Activated CD8-positive, alpha-beta T cell treated with anti-CD3 and anti-CD28 coated beads for 36 hours (primary cell): ENCODE measurements at regions of chr1 and their contacts with region 1.

Region 1: DNA sequence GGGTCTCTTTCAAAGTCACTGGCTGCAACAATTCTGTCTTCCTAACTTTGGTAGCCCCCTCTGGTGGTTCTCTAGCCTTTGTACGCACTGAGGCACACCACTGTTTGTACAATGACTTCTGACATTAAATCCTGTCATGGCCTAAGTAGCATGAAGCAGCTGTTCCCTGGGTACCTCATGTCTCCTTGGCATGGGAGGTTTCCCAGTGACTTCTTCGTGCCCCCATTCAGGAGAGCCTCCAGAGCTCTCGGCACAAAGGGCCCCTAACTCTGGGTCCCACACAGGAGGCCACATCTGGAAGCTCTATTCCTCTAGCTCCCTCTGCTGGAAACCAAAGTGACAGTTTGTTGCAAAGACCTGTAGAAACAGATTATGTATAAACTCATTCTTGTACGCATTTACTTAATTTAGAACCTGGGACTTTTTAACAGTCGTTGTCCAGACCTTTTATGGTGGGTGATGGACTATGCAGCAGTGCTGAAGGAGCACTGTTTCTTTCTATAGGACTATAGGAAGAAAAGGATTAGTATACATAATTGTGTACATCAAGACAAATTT is 13.4 kb downstream of the SWT1 start:
- DNase-seq: peak; percentile 59
- ATAC-seq: peak; percentile 95
- H3K4me3 Mint-ChIP-seq: no peak overlapping the region
- H3K27ac Mint-ChIP-seq: peak overlapping the region; percentile 64
- H3K4me1 Mint-ChIP-seq: peaks cover 4% of the 10 kb centered on the region
- H3K27me3 Mint-ChIP-seq: no peaks in the 10 kb centered on the region
- CTCF ChIP-seq: peak; percentile 80

Region 2: DNA sequence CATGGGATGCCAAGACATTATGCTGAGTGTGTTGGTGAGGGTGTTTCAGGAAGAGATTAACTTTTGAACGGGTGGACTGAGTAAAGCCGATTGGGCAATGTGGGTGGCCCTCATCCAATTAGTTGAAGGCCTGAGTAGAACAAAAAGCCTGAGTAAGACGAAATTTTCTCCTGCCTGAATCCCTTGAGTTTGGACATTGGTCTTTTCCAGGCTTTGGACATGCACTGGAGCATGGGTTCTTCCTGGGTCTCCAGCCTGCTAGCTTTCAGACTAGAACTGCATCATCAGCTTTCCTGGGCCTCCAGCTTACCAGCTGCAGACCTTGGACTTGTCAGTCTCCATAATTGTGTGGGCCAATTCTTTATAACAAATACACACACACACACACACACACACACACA is 259.7 kb before region 1 on chr1:
- CTCF ChIA-PET with region 1: no interaction called
- POLR2A ChIA-PET with region 1: no interaction called
- intact Hi-C with region 1: no loop called
- DNase-seq: no peak
- ATAC-seq: no peak
- H3K4me3 Mint-ChIP-seq: no peak overlapping the region
- H3K27ac Mint-ChIP-seq: no peak overlapping the region
- H3K4me1 Mint-ChIP-seq: peaks cover under 1% of the 10 kb centered on the region
- H3K27me3 Mint-ChIP-seq: no peaks in the 10 kb centered on the region
- CTCF ChIP-seq: no peak

Region 3: DNA sequence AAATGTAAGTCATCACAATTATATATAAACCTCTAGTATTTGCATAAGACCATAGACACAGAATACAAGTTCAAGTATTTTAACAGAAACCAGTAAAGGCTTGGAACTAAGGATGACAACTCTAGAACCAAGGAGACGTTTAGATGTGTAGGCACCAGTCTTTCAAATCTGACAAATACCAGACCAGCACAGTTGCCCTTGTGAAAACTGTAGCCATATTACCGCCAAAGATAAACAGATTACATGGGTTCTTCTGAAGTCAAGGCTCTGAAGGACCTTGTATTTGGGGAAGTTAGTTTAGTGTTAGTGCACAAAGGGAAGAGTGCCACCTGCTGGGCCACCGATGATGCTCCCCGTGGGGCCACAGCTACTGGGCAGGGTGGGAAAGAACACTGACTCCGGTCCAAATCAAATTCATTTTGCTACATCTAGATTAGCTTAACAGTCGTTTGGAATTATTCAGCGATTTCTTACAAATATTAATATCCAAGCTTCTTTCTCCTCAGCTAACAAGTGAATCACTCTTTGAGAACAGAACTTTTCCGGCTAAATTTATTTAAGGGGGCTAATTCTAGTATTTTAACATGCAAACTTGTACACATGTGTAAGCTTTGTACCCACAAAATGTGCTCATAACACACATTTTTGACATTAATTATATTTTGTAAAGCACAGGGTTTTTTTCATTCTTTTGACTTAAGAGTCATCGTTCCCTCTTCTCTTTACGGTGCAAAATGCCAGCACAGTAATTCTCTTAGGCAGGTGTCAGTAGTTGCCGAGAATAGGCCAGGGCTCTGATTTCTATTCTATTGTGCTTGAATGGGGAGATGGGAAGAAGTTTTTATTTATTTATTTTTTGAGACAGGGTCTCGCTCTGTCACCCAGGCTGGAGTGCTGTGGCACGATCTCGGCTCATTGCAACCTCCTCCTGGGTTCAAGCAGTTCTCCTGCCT is 188.1 kb before region 1 on chr1:
- CTCF ChIA-PET with region 1: interaction called, 17 read pairs
- POLR2A ChIA-PET with region 1: no interaction called
- intact Hi-C with region 1: loop called (anchors 10 kb)
- DNase-seq: peak; percentile 85
- ATAC-seq: peak; percentile 99
- H3K4me3 Mint-ChIP-seq: no peak overlapping the region
- H3K27ac Mint-ChIP-seq: no peak overlapping the region
- H3K4me1 Mint-ChIP-seq: peaks cover 5% of the 10 kb centered on the region
- H3K27me3 Mint-ChIP-seq: peaks cover 14% of the 10 kb centered on the region
- CTCF ChIP-seq: peak; percentile 93

Region 4: DNA sequence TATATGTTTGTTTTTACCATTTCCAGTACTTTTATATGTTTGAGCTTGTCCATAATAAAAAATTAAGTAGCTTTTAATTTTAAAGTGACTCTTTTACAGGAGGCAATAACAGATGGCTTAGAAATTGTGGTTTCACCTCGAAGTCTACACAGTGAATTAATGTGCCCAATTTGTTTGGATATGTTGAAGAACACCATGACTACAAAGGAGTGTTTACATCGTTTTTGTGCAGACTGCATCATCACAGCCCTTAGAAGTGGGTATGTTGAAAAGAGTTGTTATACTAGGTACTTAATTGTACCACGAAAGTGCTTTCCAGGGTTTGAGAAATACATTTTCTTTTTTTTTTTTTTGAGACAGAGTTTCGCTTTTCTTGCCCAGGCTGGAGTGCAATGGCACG is 78.9 kb before region 1 on chr1:
- CTCF ChIA-PET with region 1: interaction called, 11 read pairs
- POLR2A ChIA-PET with region 1: no interaction called
- intact Hi-C with region 1: no loop called
- DNase-seq: no peak
- ATAC-seq: no peak
- H3K4me3 Mint-ChIP-seq: no peak overlapping the region
- H3K27ac Mint-ChIP-seq: no peak overlapping the region
- H3K4me1 Mint-ChIP-seq: no peaks in the 10 kb centered on the region
- H3K27me3 Mint-ChIP-seq: no peaks in the 10 kb centered on the region
- CTCF ChIP-seq: no peak

Region 5: GRCh38 chr1:185156854-185157598 is 13.3 kb before region 1 on chr1 and contains the starts of genes SWT1 and TRMT1L:
- CTCF ChIA-PET with region 1: interaction called, 71 read pairs
- POLR2A ChIA-PET with region 1: interaction called, 6 read pairs
- intact Hi-C with region 1: no loop called
- DNase-seq: peak; percentile 100
- ATAC-seq: peak; percentile 94
- H3K4me3 Mint-ChIP-seq: peak within 1 kb of the TSS; percentile 90
- H3K27ac Mint-ChIP-seq: peak within 1 kb of the TSS; percentile 97
- H3K4me1 Mint-ChIP-seq: peaks cover 45% of the 10 kb centered on the region
- H3K27me3 Mint-ChIP-seq: no peaks in the 10 kb centered on the region
- CTCF ChIP-seq: no peak
- total RNA-seq, gene SWT1: 1.8 to 2.5 TPM
- total RNA-seq, gene TRMT1L: 25.6 TPM

Region 6: GRCh38 chr1:185453496-185454192 is 283.3 kb after region 1 on chr1:
- CTCF ChIA-PET with region 1: no interaction called
- POLR2A ChIA-PET with region 1: no interaction called
- intact Hi-C with region 1: no loop called
- DNase-seq: no peak
- ATAC-seq: no peak
- H3K4me3 Mint-ChIP-seq: no peak overlapping the region
- H3K27ac Mint-ChIP-seq: no peak overlapping the region
- H3K4me1 Mint-ChIP-seq: no peaks in the 10 kb centered on the region
- H3K27me3 Mint-ChIP-seq: no peaks in the 10 kb centered on the region
- CTCF ChIP-seq: no peak

Region 7: GRCh38 chr1:185670187-185670627 is 499.8 kb after region 1 on chr1:
- CTCF ChIA-PET with region 1: interaction called, 13 read pairs
- POLR2A ChIA-PET with region 1: no interaction called
- intact Hi-C with region 1: no loop called
- DNase-seq: peak; percentile 79
- ATAC-seq: peak; percentile 82
- H3K4me3 Mint-ChIP-seq: no peak overlapping the region
- H3K27ac Mint-ChIP-seq: peak overlapping the region; percentile 31
- H3K4me1 Mint-ChIP-seq: peaks cover 23% of the 10 kb centered on the region
- H3K27me3 Mint-ChIP-seq: no peaks in the 10 kb centered on the region
- CTCF ChIP-seq: peak; percentile 61